AG04449 (cell line): ENCODE measurements at regions of chr5 and their contacts with region 1.

Region 1: GRCh38 chr5:38193015-38193581 is 65.3 kb upstream of the EGFLAM start:
- DNase-seq: no peak
- H3K4me3 ChIP-seq: no peak overlapping the region
- CTCF ChIP-seq: peak; percentile 93

Region 2: GRCh38 chr5:37400501-37400900 is 792.6 kb before region 1 on chr5:
- CTCF ChIA-PET with region 1: interaction called, 15 read pairs
- POLR2A ChIA-PET with region 1: no interaction called
- DNase-seq: no peak
- H3K4me3 ChIP-seq: no peak overlapping the region
- CTCF ChIP-seq: no peak

Region 3: GRCh38 chr5:37810311-37810710 is 382.8 kb before region 1 on chr5:
- CTCF ChIA-PET with region 1: interaction called, 11 read pairs
- POLR2A ChIA-PET with region 1: no interaction called
- DNase-seq: no peak
- H3K4me3 ChIP-seq: peak overlapping the region; percentile 50
- CTCF ChIP-seq: no peak

Region 4: DNA sequence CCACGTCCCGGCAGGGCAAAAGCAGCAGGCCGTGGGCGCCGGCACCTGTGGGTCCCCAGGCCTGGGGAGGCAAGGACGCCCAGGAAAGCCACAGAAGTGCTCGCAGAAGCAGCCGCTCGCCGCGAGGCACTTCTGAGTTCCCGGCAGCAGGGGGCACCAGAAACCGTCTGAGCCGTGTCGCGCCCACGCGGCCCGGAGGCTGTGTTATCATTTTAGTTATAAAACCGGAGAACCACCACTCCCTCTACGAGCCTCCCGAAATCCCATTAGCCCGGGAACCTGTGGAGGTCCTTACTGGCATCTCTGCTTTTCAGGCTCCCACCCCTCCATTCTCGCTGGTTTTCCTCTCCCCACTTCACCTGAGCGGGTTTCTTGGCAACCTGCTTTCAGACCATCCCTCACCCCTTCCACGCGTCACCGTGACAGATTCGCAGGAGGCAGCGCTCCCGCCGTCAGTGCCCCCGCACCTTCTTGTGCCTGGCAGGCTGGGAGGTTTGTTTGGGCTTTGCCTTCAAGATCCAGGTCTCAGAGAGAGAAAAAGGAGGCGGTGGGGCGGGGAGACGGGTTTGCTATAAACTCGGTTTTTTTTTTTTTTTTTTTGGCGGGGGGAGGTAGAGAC is 355.6 kb before region 1 on chr5:
- CTCF ChIA-PET with region 1: interaction called, 77 read pairs
- POLR2A ChIA-PET with region 1: interaction called, 4 read pairs
- DNase-seq: no peak
- H3K4me3 ChIP-seq: peak overlapping the region; percentile 68
- CTCF ChIP-seq: peak; percentile 88

Region 5: GRCh38 chr5:37915097-37915736 is 277.9 kb before region 1 on chr5:
- CTCF ChIA-PET with region 1: no interaction called
- POLR2A ChIA-PET with region 1: no interaction called
- DNase-seq: no peak
- H3K4me3 ChIP-seq: no peak overlapping the region
- CTCF ChIP-seq: no peak

Region 6: DNA sequence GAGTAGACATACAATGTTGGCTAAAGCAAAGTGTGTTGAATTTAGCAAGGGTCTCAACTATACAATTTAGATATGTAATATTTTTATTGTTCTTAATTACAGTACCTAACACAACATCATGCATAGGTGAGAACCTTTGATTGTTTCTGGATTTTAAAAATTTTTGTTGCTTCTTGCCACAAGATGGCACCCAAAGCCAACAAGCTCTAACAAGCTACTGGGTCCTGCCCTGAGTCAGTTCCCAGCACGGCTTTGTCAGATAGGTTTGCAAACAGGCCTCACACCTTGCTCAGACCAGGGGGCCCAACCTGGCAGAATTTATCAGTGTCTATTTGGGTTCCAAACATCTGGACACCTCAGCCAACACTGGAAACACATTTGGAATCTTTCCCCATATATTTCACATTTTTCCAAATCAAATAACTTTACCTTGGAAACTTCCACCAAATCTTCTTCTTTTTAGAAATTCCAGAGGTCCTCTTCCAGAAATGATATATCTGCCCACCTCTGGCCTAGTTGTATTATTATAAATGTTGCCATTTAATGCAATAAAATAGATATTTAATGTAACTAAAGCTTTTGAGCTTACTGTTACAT is 15.8 kb after region 1 on chr5:
- CTCF ChIA-PET with region 1: interaction called, 11 read pairs
- POLR2A ChIA-PET with region 1: no interaction called
- DNase-seq: no peak
- H3K4me3 ChIP-seq: no peak overlapping the region
- CTCF ChIP-seq: peak; percentile 25